MCF 10A (cell line): ENCODE measurements at regions of chr14 and their contacts with region 1.

Region 1: GRCh38 chr14:30283826-30284446 is 275.0 kb upstream of the G2E3 start:
- DNase-seq: peak; percentile 75
- H3K4me3 Mint-ChIP-seq: no peak overlapping the region
- H3K27ac Mint-ChIP-seq: no peak overlapping the region
- H3K4me1 Mint-ChIP-seq: no peaks in the 10 kb centered on the region
- H3K27me3 Mint-ChIP-seq: no peaks in the 10 kb centered on the region
- CTCF ChIP-seq: peak; percentile 73

Region 2: GRCh38 chr14:30260833-30261607 is 22.9 kb before region 1 on chr14:
- CTCF ChIA-PET with region 1: interaction called, 163 read pairs
- POLR2A ChIA-PET with region 1: interaction called, 5 read pairs
- intact Hi-C with region 1: no loop called
- DNase-seq: no peak
- H3K4me3 Mint-ChIP-seq: no peak overlapping the region
- H3K27ac Mint-ChIP-seq: no peak overlapping the region
- H3K4me1 Mint-ChIP-seq: peaks cover 20% of the 10 kb centered on the region
- H3K27me3 Mint-ChIP-seq: no peaks in the 10 kb centered on the region
- CTCF ChIP-seq: no peak

Region 3: GRCh38 chr14:30296931-30297405 is 13.0 kb after region 1 on chr14:
- CTCF ChIA-PET with region 1: interaction called, 26 read pairs
- POLR2A ChIA-PET with region 1: interaction called, 6 read pairs
- intact Hi-C with region 1: no loop called
- DNase-seq: no peak
- H3K4me3 Mint-ChIP-seq: no peak overlapping the region
- H3K27ac Mint-ChIP-seq: no peak overlapping the region
- H3K4me1 Mint-ChIP-seq: peaks cover 14% of the 10 kb centered on the region
- H3K27me3 Mint-ChIP-seq: no peaks in the 10 kb centered on the region
- CTCF ChIP-seq: no peak